ENCODE measurements at regions of chr5 and their contacts with region 1.

Region 1: DNA sequence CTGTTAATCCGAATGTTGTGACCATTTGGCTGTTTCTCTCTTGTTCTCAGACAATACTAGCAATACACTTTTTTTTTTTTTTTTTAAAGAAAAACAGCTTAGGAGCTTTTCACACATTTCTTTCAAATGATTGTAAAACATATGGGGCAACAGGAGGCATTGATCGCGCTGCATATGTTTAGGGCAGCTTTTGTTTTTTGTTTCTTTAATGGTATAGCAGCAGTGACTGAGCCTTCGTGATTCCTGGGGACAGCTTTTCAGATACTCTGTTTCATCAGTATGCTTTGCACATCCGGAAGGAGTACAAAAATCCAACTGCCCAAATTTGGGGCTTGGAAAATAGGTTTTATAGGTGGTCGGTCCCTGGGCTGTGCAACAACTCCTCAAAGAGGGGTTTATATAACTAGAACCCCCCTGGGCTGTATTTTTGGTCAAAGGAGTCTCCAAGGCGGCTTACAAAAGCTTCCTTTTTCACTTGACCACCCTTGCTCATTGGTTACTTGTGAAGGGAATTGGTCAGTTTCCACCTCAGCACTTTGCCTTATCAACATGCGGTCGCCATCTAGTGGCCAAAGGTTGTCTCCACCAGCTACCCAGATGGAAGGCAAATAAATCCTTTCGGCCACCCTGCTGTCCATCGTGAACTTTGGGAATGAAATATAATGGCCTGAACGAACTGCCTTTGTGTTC is 91.8 kb downstream of the PDE6A start:
- DNase-seq: peak; percentile 79
- H3K27ac ChIP-seq: no peak overlapping the region
- CTCF ChIP-seq: peak; percentile 95

Region 2: GRCh38 chr5:149828161-149828884 is 24.5 kb before region 1 on chr5:
- CTCF ChIA-PET with region 1: interaction called, 16 read pairs
- POLR2A ChIA-PET with region 1: no interaction called
- DNase-seq: peak; percentile 93
- H3K27ac ChIP-seq: peak overlapping the region; percentile 61
- CTCF ChIP-seq: peak; percentile 91

Region 3: DNA sequence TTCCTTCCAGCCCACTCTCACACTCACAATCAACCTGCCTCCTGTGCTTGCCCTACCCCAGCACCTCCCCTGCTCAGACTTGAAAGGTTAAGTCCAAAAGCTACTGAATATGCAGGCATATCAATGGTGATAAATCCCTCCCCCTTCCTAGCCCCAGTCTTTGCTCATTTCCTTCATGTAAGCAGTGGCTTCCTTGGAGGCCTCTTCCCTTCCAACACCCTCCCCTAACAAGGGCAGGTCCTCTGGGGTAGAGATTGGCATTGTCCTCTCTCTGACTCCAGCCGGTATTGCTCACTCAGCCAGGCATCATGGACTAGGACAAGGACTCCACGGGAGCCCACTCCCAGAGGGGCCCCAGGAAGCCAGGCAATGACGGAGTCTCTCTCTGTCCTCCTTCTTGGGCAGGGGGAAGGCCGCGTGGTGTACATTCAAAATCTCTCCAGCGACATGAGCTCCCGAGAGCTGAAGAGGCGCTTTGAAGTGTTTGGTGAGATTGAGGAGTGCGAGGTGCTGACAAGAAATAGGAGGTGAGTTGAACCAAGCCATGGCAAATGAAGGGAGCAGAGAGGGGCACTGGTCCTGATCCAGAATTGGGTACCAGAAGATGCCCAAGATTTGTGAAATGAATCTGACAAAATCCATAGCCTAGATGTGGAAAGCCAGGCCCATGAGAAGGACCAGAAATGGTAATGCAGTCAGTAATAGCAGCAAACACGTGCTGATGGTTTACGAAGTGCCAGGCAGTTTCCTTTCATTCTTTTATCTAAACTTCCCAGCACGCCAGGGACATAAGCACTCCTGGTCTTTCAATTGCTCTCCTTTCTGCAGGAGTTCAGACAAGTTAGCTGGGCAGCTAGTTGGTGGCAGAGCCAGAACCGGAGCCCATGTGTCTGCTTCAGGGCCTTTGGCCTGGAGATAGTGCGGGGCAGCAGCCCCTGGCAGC is 10.7 kb before region 1 on chr5:
- CTCF ChIA-PET with region 1: interaction called, 29 read pairs
- POLR2A ChIA-PET with region 1: no interaction called
- DNase-seq: no peak
- H3K27ac ChIP-seq: no peak overlapping the region
- CTCF ChIP-seq: no peak

Region 4: GRCh38 chr5:149960272-149961185 is 107.7 kb after region 1 on chr5 and contains the start of gene SLC26A2:
- CTCF ChIA-PET with region 1: interaction called, 55 read pairs
- POLR2A ChIA-PET with region 1: no interaction called
- DNase-seq: peak; percentile 99
- H3K27ac ChIP-seq: peak within 1 kb of the TSS; percentile 90
- CTCF ChIP-seq: no peak